Activated CD4-positive, alpha-beta T cell treated with anti-CD3 and anti-CD28 coated beads, Interleukin-2, amount 10 ng/mL, durations not matched to agents 7 days and 5 days (primary cell): ENCODE measurements at regions of chr3 and their contacts with region 1.

Region 1: DNA sequence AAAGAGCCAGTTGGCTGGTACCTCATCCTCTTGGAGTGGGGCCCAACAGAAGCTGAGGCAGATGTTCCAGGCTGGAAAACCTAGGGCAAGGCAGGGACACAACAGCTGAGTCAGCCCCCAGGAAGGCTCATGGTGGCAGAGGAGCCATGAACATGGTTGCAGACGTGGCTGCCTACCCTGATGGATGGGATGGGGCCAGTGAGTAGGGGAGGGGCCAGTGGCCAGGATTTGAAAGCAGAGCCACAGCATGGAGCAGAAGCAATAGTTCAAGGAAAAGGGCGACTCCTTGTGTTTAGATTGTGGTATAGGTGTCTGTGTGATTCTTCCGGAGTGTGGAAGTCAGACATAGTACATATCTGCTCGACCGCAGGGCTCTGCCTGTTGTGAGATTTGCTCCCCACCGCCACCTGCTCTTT is 24.2 kb downstream of the PXYLP1 start:
- DNase-seq: peak; percentile 61
- H3K4me3 Mint-ChIP-seq: no peak overlapping the region
- H3K27ac Mint-ChIP-seq: peak overlapping the region; percentile 67
- H3K4me1 Mint-ChIP-seq: peaks cover 31% of the 10 kb centered on the region
- H3K27me3 Mint-ChIP-seq: no peaks in the 10 kb centered on the region

Region 2: GRCh38 chr3:141243271-141243707 is 12.6 kb before region 1 on chr3:
- CTCF ChIA-PET with region 1: interaction called, 53 read pairs
- POLR2A ChIA-PET with region 1: no interaction called
- DNase-seq: peak; percentile 56
- H3K4me3 Mint-ChIP-seq: peak overlapping the region; percentile 43
- H3K27ac Mint-ChIP-seq: peak overlapping the region; percentile 71
- H3K4me1 Mint-ChIP-seq: peaks cover 42% of the 10 kb centered on the region
- H3K27me3 Mint-ChIP-seq: no peaks in the 10 kb centered on the region

Region 3: DNA sequence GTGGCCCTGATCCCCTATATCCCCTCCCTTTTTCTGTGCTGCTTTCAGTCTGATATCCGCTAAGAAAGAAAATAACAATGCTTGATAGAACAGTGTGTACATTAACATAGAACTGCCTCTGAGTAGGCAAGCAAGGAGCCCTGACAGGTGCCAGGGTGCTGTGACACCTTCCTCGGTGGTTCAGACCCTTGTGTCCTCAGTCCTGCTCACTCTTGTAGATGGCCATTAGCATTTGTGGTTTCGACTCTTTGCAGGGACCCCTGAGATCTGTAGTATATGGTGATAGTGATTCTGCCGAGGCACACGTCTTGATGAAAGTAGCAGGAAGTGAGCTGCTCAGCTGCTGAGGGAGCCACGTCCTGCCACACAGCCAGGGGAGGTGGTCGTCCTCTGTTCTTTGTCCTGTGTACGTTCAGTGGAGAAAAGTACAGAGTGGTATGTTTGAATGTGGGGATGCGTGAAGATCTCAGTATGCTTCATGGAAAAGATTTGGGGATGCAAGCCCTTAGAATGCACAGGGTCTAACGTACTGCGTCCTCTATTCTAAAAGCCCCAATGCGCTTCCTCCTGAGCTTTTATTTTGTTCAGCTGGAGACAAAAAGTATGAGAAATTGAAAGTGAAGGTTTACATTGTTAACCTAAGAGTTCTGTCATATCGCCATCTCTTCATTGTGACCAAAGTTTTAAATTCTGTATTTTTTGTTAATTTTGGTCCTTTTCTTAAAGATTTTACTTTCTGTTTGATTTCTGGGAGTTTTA is 11.1 kb after region 1 on chr3:
- CTCF ChIA-PET with region 1: interaction called, 14 read pairs
- POLR2A ChIA-PET with region 1: no interaction called
- DNase-seq: peak; percentile 58
- H3K4me3 Mint-ChIP-seq: peak overlapping the region; percentile 78
- H3K27ac Mint-ChIP-seq: peak overlapping the region; percentile 98
- H3K4me1 Mint-ChIP-seq: peaks cover 41% of the 10 kb centered on the region
- H3K27me3 Mint-ChIP-seq: no peaks in the 10 kb centered on the region